CD4-positive, alpha-beta T cell (primary cell): ENCODE measurements at regions of chr17 and their contacts with region 1.

Region 1: DNA sequence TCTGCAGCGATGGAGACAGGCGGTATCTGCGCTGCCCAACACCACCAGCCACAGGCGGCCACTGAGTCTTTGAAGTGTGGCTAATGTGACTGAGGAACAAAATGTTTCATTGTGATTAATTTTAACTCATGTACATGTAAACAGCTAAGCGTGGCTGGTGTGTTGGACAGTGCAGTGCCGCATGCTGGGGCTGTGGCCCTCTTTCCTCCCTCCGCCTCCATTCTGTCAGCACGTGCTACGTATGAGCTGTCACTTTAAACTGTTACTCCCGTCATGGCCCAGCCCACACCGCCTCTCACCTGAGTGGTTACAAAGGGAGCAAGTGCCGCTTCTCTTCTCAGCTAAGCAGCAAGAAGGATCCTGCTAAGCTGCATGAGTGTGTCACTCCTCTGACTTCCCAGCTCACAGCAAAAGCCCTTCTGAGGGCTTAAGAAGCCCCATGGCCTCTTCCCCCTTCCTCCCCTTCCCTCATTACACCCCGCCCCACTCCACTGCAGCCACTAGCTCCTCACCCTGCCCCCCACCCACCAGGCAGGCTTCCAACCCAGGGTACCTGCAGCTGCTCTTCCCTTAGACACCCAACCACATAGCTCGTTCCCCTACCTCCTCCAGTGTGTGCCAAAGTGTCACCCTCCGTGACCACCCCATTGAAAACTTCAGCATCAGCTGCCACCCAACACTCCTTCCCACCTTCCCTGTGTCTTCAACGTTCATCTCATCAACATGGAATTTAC is 15.0 kb downstream of the HASPIN start:
- DNase-seq: peak; percentile 43 to 80 (median 61)
- ATAC-seq: peak; percentile 89
- H3K4me3 ChIP-seq: no peak overlapping the region
- H3K4me3 Mint-ChIP-seq: peak overlapping the region; percentile 27
- H3K27ac ChIP-seq: no peak overlapping the region
- H3K27ac Mint-ChIP-seq: peak overlapping the region; percentile 54
- H3K4me1 ChIP-seq: peaks cover 43% of the 10 kb centered on the region
- H3K4me1 Mint-ChIP-seq: peaks cover 44% of the 10 kb centered on the region
- H3K27me3 ChIP-seq: no peaks in the 10 kb centered on the region
- H3K27me3 Mint-ChIP-seq: no peaks in the 10 kb centered on the region
- CTCF ChIP-seq: no peak

Region 2: GRCh38 chr17:3594051-3594800 is 144.5 kb before region 1 on chr17:
- CTCF ChIA-PET with region 1: no interaction called
- POLR2A ChIA-PET with region 1: no interaction called
- intact Hi-C with region 1: no loop called
- DNase-seq: no peak
- ATAC-seq: no peak
- H3K4me3 ChIP-seq: no peak overlapping the region
- H3K4me3 Mint-ChIP-seq: no peak overlapping the region
- H3K27ac ChIP-seq: no peak overlapping the region
- H3K27ac Mint-ChIP-seq: no peak overlapping the region
- H3K4me1 ChIP-seq: no peaks in the 10 kb centered on the region
- H3K4me1 Mint-ChIP-seq: no peaks in the 10 kb centered on the region
- H3K27me3 ChIP-seq: no peaks in the 10 kb centered on the region
- H3K27me3 Mint-ChIP-seq: no peaks in the 10 kb centered on the region
- CTCF ChIP-seq: no peak

Region 3: DNA sequence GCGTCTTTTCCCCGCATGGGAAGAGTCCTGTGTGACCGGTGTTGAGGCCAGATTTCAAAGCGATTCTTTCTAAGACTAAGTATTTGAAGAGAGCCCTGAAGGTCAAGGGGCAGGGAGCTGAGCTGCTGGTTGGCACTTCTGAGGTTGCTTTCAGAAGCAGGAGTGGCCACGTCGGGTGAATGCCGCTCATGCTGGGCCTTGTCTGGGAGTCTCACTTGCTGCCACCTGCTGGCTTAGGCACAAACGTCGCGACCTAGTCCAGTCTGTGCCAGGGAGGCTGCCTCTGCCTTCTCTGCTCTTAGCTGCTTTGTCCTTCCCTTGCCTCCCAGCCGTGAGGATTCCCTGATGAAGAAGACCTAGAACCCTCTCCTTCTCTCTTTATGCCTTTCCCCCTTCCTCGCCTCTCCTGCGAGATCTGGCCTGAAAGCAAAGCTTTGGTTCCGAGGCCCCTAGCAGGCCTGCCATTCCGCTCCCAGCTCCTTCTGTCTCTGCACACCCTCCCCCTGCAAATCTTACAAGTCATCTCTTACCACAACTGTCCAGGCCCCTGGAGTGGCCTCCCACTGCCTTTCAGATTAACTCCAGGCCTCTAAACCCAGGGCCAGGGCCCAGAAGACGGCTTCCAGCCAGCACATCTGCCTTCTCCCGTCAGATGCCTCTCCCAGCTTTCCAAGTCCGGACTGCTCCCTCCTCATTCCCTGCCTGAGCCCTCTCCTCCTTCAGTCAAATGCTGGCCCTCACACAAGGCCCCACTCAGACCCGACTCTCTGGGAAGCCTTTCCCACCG is 90.8 kb before region 1 on chr17:
- CTCF ChIA-PET with region 1: no interaction called
- POLR2A ChIA-PET with region 1: no interaction called
- intact Hi-C with region 1: no loop called
- DNase-seq: peak in 10 of 14 experiments; percentile 14 to 60 (median 32)
- ATAC-seq: peak; percentile 68
- H3K4me3 ChIP-seq: no peak overlapping the region
- H3K4me3 Mint-ChIP-seq: no peak overlapping the region
- H3K27ac ChIP-seq: no peak overlapping the region
- H3K27ac Mint-ChIP-seq: no peak overlapping the region
- H3K4me1 ChIP-seq: peaks cover 3% of the 10 kb centered on the region
- H3K4me1 Mint-ChIP-seq: no peaks in the 10 kb centered on the region
- H3K27me3 ChIP-seq: no peaks in the 10 kb centered on the region
- H3K27me3 Mint-ChIP-seq: no peaks in the 10 kb centered on the region
- CTCF ChIP-seq: peak; percentile 20

Region 4: DNA sequence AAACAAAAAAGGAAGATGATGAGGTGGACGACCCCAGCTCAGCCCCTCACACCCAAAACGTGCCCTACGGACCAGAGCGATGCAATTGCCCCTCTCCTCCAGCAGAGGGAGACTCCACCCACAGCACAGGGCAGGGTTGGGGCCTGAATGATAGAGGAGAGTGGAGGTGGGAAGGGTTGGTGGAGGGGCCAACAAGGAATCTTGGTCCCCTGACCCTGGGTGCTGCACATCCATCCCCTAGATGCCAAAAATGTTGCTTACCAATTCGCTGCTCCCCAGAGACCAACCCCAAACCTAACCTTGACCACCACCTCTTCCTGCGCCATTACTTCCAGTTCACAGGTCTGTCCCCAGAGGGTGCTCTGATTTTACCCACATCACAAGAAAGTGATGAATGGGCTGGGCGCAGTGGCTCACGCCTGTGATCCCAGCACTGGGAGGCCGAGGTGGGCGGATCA is 55.6 kb before region 1 on chr17:
- CTCF ChIA-PET with region 1: interaction called, 14 read pairs
- POLR2A ChIA-PET with region 1: no interaction called
- intact Hi-C with region 1: loop called (anchors 1 to 2 kb)
- DNase-seq: peak; percentile 30 to 80 (median 50)
- ATAC-seq: peak; percentile 97
- H3K4me3 ChIP-seq: no peak overlapping the region
- H3K4me3 Mint-ChIP-seq: no peak overlapping the region
- H3K27ac ChIP-seq: no peak overlapping the region
- H3K27ac Mint-ChIP-seq: no peak overlapping the region
- H3K4me1 ChIP-seq: peaks cover 16% of the 10 kb centered on the region
- H3K4me1 Mint-ChIP-seq: peaks cover 7% of the 10 kb centered on the region
- H3K27me3 ChIP-seq: no peaks in the 10 kb centered on the region
- H3K27me3 Mint-ChIP-seq: no peaks in the 10 kb centered on the region
- CTCF ChIP-seq: peak; percentile 95

Region 5: DNA sequence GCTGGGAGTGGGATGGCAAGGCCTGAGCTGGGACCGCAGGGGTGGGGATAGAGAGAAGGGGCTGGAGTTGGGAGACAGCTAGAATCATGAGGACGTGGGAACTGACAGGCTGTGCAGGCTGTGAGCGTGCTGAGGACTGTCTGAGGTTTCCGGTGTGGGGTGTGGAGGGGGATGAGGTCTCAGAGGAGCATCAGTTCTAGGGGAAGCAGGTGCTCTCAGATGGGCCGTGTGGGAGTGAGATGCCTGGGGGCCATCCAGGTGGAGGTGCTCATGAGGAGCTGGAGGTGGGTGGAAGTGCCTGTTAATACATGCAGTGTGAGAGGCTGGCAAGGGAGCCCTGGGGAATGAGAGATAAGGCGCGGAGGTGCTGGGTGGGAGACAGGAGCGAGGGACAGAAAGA is 12.2 kb after region 1 on chr17:
- CTCF ChIA-PET with region 1: interaction called, 8 read pairs
- POLR2A ChIA-PET with region 1: interaction called, 11 read pairs
- intact Hi-C with region 1: no loop called
- DNase-seq: peak in 13 of 14 experiments; percentile 25 to 80 (median 48)
- ATAC-seq: peak; percentile 43
- H3K4me3 ChIP-seq: no peak overlapping the region
- H3K4me3 Mint-ChIP-seq: peak overlapping the region; percentile 84
- H3K27ac ChIP-seq: no peak overlapping the region
- H3K27ac Mint-ChIP-seq: peak overlapping the region; percentile 86
- H3K4me1 ChIP-seq: peaks cover 65% of the 10 kb centered on the region
- H3K4me1 Mint-ChIP-seq: peaks cover 52% of the 10 kb centered on the region
- H3K27me3 ChIP-seq: no peaks in the 10 kb centered on the region
- H3K27me3 Mint-ChIP-seq: no peaks in the 10 kb centered on the region
- CTCF ChIP-seq: no peak

Region 6: DNA sequence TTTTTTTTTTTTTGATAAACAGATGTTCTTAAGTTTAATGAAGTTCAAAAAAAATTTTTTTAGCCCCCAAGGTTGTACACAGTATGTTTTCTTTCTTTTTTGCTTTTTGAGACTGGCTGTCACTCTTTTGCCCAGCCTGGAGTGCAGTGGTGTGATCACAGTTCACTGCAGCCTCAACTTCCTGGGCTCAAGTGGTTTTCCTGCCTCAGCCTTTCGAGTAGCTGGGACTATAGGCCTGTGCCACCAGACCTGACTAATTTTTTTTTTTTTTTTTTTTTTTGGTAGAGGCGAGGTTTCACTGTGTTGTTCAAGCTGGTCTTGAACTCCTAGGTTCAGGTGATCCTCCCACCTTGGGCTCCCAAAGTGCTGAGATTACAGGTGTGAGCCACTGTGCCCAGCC is 49.5 kb after region 1 on chr17:
- CTCF ChIA-PET with region 1: interaction called, 3 read pairs
- POLR2A ChIA-PET with region 1: interaction called, 9 read pairs
- intact Hi-C with region 1: loop called (anchors 5 to 10 kb)
- DNase-seq: peak in 4 of 14 experiments; percentile 26 to 72 (median 46)
- ATAC-seq: peak; percentile 37
- H3K4me3 ChIP-seq: no peak overlapping the region
- H3K4me3 Mint-ChIP-seq: no peak overlapping the region
- H3K27ac ChIP-seq: no peak overlapping the region
- H3K27ac Mint-ChIP-seq: no peak overlapping the region
- H3K4me1 ChIP-seq: peaks cover 8% of the 10 kb centered on the region
- H3K4me1 Mint-ChIP-seq: peaks cover 13% of the 10 kb centered on the region
- H3K27me3 ChIP-seq: no peaks in the 10 kb centered on the region
- H3K27me3 Mint-ChIP-seq: no peaks in the 10 kb centered on the region
- CTCF ChIP-seq: no peak

Region 7: DNA sequence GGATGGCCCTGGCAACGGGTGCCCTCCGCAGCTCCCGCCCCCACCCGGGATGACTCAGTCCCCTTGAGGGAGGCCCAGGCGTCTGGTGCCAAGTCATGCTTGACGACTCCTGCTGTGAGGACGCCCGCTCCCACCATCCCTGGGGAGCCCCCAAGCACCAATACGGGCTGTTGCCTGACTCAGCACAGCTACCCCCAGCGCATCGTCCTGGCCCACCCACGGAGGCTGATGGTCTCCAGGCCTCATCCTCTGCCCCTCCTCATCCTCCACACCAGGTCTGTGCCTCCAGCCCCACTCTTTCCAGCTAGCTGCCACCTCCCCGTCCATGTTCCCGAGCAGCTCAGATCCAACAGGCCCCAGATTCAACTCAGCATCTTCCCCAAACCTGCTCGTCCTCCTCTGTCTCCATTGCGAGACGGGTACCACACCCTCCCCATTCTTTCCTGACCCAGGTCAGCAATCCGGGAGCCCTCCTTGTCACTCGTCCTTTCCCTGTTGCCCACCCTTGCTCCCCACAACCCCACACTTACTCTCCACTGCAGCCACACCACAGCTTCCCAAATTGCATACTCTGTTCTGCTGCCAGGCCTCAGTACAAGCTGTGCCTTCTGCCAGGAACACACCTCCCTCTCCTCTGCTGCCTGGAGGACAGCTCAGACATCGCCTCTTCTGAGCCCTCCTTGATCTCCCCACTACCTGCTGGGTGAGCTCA is 151.6 kb after region 1 on chr17:
- CTCF ChIA-PET with region 1: no interaction called
- POLR2A ChIA-PET with region 1: no interaction called
- intact Hi-C with region 1: no loop called
- DNase-seq: peak in 1 of 14 experiments; percentile 48
- ATAC-seq: no peak
- H3K4me3 ChIP-seq: no peak overlapping the region
- H3K4me3 Mint-ChIP-seq: peak overlapping the region; percentile 45
- H3K27ac ChIP-seq: no peak overlapping the region
- H3K27ac Mint-ChIP-seq: peak overlapping the region; percentile 82
- H3K4me1 ChIP-seq: peaks cover 57% of the 10 kb centered on the region
- H3K4me1 Mint-ChIP-seq: peaks cover 57% of the 10 kb centered on the region
- H3K27me3 ChIP-seq: no peaks in the 10 kb centered on the region
- H3K27me3 Mint-ChIP-seq: no peaks in the 10 kb centered on the region
- CTCF ChIP-seq: no peak

Region 8: GRCh38 chr17:4004517-4005295 is 266.0 kb after region 1 on chr17:
- CTCF ChIA-PET with region 1: no interaction called
- POLR2A ChIA-PET with region 1: no interaction called
- intact Hi-C with region 1: loop called (anchors 5 to 10 kb)
- DNase-seq: peak; percentile 34 to 81 (median 54)
- ATAC-seq: peak; percentile 93
- H3K4me3 ChIP-seq: no peak overlapping the region
- H3K4me3 Mint-ChIP-seq: no peak overlapping the region
- H3K27ac ChIP-seq: no peak overlapping the region
- H3K27ac Mint-ChIP-seq: no peak overlapping the region
- H3K4me1 ChIP-seq: peaks cover 9% of the 10 kb centered on the region
- H3K4me1 Mint-ChIP-seq: peaks cover 8% of the 10 kb centered on the region
- H3K27me3 ChIP-seq: no peaks in the 10 kb centered on the region
- H3K27me3 Mint-ChIP-seq: no peaks in the 10 kb centered on the region
- CTCF ChIP-seq: peak; percentile 97